Lower leg skin (tissue), 4 donors: ENCODE measurements at regions of chr20 and their contacts with region 1.

Region 1: GRCh38 chr20:40046703-40047102 is 642.3 kb downstream of the MAFB start:
- DNase-seq: no peak
- H3K4me3 ChIP-seq: no peak overlapping the region
- CTCF ChIP-seq: no peak
- POLR2A ChIP-seq: no peak

Region 2: GRCh38 chr20:38900606-38901005 is 1146.1 kb before region 1 on chr20:
- intact Hi-C with region 1: loop called (anchors 5 kb)
- DNase-seq: no peak
- H3K4me3 ChIP-seq: no peak overlapping the region
- CTCF ChIP-seq: no peak
- POLR2A ChIP-seq: no peak

Region 3: DNA sequence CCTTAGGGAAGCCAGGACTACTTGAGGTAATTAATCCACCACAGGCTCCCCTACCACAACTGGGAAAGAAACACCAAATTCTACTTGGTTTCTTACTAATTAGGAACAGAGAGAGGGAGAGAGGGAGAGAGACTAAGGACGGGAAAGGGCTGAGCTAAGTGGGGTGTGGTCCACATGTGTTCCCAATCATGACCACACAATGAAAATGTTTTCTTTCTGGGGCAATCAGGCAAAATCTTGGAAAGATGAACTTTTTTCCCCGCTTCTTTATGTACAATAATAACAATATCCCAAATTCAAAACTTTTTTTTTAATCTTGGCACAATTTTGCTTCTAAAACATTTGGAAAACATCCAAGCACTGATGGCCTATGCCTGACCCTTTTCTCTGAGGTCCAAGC is 92.1 kb before region 1 on chr20:
- intact Hi-C with region 1: no loop called
- DNase-seq: peak in 1 of 2 donors; percentile 40
- H3K4me3 ChIP-seq: no peak overlapping the region
- CTCF ChIP-seq: no peak
- POLR2A ChIP-seq: no peak